ENCODE measurements at regions of chr1 and their contacts with region 1.

Region 1: DNA sequence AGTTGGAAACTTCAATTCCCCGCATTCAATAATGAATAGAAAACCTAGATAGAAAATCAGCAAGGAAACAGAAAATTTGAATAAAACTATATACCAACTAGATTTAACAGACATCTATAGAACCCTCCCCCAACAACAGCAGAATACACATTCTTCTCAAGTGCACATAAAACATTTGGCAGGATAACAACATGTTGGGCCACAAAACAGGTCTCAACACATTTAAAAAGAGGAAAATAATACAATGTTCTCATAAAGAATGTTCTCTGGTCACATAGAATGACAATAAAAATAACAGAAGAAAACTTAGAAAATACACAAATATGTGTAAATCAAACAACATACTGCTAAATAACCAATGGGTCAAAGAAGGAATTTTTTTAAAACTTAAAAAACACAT is 24.9 kb downstream of the ITGB3BP start:
- DNase-seq: no peak
- ATAC-seq: no peak
- H3K4me3 Mint-ChIP-seq: no peak overlapping the region
- H3K27ac Mint-ChIP-seq: no peak overlapping the region
- H3K4me1 Mint-ChIP-seq: no peaks in the 10 kb centered on the region
- H3K27me3 Mint-ChIP-seq: no peaks in the 10 kb centered on the region
- CTCF ChIP-seq: no peak

Region 2: DNA sequence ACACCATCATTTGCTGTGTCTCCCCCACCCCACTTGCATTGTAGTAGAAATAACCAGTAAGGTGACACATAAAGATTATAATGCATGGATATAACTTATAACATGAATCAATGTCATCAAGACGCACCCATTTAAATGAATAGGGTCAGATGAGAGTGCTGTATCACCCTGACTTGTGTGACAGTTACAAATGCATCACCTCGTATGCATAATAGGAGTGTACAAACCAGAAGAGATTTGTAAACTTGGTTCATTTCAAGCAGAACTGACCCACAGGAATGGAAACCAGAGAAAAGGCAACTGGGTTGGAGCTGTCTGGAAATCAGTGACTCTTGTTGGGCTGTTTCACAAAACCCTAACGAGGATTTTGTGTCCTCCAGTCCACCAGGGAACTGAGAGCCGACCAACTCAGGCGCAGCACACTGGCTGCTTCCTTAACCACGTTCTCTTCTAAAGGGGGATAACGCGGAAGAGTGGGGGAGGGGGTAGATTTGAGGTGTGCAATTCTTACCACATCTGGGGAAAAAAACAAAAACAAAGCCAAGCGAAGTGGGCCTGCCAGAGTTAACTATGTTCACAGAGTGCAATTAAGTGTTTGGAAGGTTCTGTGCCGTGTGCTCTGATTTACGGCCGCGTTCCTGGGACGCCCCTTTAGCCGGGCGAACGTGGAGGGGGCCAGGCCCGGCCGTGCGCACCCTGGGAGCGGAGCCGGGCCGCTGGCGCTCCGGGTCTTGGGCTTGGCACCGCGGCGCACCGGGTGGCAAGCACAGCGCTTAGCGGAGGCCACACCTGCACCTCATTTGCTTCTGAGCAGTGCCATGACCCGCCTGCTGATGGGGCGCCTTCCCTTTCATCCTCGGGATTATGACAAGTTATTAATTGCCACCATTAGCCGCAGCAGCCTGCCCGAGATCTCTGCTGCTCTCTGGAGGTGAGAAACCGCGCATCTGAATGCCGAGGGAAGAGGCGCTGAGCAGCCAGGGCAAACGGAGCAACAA is 424.5 kb before region 1 on chr1:
- CTCF ChIA-PET with region 1: no interaction called
- POLR2A ChIA-PET with region 1: interaction called, 12 read pairs
- DNase-seq: peak; percentile 43
- ATAC-seq: peak; percentile 86
- H3K4me3 Mint-ChIP-seq: peak overlapping the region; percentile 72
- H3K27ac Mint-ChIP-seq: no peak overlapping the region
- H3K4me1 Mint-ChIP-seq: peaks cover 20% of the 10 kb centered on the region
- H3K27me3 Mint-ChIP-seq: peaks cover 42% of the 10 kb centered on the region
- CTCF ChIP-seq: no peak

Measured in WTC11 (cell line).